ENCODE measurements at regions of chr3 and their contacts with region 1.

Region 1: GRCh38 chr3:179224584-179224983 is 26.3 kb downstream of the KCNMB3 start:
- DNase-seq: no peak
- ATAC-seq: no peak
- H3K4me3 ChIP-seq: no peak overlapping the region
- H3K27ac ChIP-seq: no peak overlapping the region
- H3K4me1 ChIP-seq: no peaks in the 10 kb centered on the region
- H3K27me3 ChIP-seq: no peaks in the 10 kb centered on the region
- CTCF ChIP-seq: no peak

Region 2: DNA sequence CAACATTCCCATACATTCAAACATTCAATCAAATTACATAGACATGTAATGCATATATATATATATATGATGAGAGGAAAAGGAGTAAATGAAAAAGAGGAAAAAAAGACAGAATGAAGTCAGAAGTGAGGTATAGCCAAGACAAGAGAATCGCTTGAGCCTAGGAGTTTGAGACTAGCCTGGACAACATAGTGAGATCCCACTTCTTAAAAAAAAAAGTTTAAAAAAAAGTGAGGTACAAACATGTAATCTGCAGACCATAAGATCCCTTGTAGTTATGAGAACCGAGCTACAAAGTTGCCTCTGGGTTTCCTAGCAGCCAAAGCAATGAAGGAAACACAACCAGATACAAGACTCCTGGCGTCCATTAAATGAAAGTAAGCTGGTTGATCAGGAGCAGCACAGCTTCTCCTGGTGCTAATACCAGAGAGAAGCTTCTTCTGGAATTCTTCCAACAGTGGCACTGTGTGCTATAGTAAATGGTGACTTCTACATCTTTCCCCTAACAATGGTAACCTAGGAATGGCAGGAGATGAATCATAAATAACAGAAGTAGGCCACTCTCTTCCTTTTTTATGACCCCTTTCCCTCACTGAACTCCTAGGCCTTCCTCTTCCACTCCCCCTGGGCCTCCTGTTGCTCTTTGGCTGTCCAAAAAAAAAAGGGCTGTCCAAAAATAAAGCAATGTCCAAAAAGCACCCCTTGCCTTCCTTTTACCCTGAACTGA is 22.9 kb after region 1 on chr3:
- CTCF ChIA-PET with region 1: no interaction called
- POLR2A ChIA-PET with region 1: interaction called, 10 read pairs
- in situ Hi-C with region 1: no loop called
- intact Hi-C with region 1: no loop called
- DNase-seq: no peak
- ATAC-seq: no peak
- H3K4me3 ChIP-seq: no peak overlapping the region
- H3K27ac ChIP-seq: no peak overlapping the region
- H3K4me1 ChIP-seq: no peaks in the 10 kb centered on the region
- H3K27me3 ChIP-seq: no peaks in the 10 kb centered on the region
- CTCF ChIP-seq: no peak

Region 3: GRCh38 chr3:179666436-179667035 is 442.0 kb after region 1 on chr3:
- CTCF ChIA-PET with region 1: no interaction called
- POLR2A ChIA-PET with region 1: no interaction called
- in situ Hi-C with region 1: no loop called
- intact Hi-C with region 1: no loop called
- DNase-seq: no peak
- ATAC-seq: 0 out of 2 replicates have a peak, but pooled peaks have one; percentile 33
- H3K4me3 ChIP-seq: no peak overlapping the region
- H3K27ac ChIP-seq: no peak overlapping the region
- H3K4me1 ChIP-seq: 0 out of 2 replicates have a peak, but pooled peaks cover under 1% of the 10 kb centered on the region
- H3K27me3 ChIP-seq: no peaks in the 10 kb centered on the region
- CTCF ChIP-seq: no peak

Measured in Panc1 (cell line).